HEK293 (cell line): ENCODE measurements at regions of chr16 and their contacts with region 1.

Region 1: GRCh38 chr16:4402439-4403132 is 13.8 kb downstream of the CORO7 start:
- H3K4me3 ChIP-seq: no peak overlapping the region
- H3K27ac ChIP-seq: no peak overlapping the region
- H3K4me1 ChIP-seq: no peaks in the 10 kb centered on the region
- CTCF ChIP-seq: peak; percentile 98

Region 2: GRCh38 chr16:4261557-4262172 is 140.9 kb before region 1 on chr16:
- CTCF ChIA-PET with region 1: interaction called, 14 read pairs
- POLR2A ChIA-PET with region 1: no interaction called
- H3K4me3 ChIP-seq: no peak overlapping the region
- H3K27ac ChIP-seq: no peak overlapping the region
- H3K4me1 ChIP-seq: no peaks in the 10 kb centered on the region
- CTCF ChIP-seq: peak; percentile 56

Region 3: DNA sequence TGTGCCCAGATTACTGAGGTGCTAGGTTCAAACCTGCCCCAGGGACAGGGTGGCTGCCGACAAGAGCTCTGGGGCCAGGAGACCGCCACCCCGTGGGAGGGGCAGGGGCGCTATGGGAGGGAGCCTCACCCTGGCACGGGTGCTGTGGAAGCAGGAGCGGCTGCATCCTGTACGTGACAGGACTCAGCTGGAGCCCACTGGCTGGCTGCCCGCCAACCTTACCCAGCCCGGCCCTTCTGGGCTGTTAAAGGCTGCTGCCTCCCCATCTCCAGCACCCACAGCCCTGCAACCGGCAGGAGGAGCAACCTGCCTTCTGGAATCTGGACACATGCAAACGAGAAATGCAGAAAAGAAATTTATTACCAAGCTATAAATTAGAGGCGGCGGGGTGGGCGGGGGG is 62.7 kb before region 1 on chr16:
- CTCF ChIA-PET with region 1: interaction called, 22 read pairs
- POLR2A ChIA-PET with region 1: no interaction called
- H3K4me3 ChIP-seq: no peak overlapping the region
- H3K27ac ChIP-seq: 0 out of 2 replicates have a peak overlapping the region, but pooled peaks have one; percentile 2
- H3K4me1 ChIP-seq: peaks cover 2% of the 10 kb centered on the region; the same call in 1 of the 2 replicates
- CTCF ChIP-seq: peak; percentile 35; the same call in 1 of the 2 replicates

Region 4: DNA sequence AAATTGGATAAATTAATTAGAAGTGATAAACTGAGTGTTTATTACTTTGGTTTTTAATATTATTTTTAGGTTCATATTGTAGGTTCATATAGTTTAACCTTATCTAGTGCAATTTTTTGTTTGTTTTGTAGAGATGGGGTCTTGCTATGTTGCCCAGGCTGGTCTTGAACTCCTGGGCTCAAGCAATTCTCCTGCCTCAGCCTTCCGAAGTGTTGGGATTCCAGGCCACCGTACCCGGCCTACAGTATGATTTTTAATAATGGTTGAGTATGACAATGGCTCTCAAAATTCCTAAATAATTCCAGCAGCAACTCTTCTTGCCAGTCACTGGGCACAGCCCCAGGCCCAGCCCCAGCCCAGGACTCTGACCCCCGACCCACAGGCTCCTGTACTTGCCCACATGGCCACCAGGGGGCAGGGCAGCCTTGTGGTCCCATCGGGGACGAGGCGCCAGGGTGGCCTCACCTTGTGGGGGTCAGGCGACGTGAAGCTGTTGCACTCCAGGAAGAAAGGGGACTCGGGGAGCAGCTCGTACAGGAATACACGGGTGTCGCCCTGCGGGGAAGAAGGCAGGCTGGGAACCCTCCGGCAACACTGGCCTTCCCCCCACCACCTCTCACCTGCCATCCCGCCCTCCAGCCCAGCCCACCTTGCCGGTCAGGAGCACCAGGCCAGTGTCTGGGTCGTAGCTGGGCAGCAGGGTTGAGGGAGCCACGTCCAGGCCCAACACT is 43.6 kb before region 1 on chr16:
- CTCF ChIA-PET with region 1: interaction called, 118 read pairs
- POLR2A ChIA-PET with region 1: interaction called, 7 read pairs
- H3K4me3 ChIP-seq: no peak overlapping the region
- H3K27ac ChIP-seq: no peak overlapping the region
- H3K4me1 ChIP-seq: no peaks in the 10 kb centered on the region
- CTCF ChIP-seq: peak; percentile 73

Region 5: DNA sequence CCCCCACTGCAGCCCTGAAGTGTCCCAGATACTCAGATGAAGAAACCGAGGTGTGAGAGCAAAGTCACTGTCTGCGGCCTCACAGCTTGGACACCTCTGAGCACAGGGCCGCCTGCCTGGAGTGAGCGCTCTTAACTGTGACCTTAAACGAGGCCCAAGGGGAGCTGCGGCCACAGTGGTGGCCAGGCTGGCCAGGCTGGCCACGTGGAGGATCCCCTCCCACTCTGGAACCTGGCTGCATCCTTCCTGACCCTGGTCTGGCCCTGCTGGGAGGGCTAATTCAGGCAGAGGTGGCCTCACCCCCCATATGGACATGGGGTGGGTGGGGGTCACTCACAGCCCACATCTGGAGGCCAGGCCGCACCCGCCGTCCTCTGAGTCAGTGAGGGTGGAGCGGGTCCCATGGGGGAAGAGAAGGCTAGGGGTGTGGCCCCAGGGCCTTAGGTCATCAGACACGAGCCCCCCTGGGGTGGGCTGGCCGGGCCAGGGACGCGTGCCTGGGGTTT is 24.4 kb before region 1 on chr16:
- CTCF ChIA-PET with region 1: interaction called, 32 read pairs
- POLR2A ChIA-PET with region 1: no interaction called
- H3K4me3 ChIP-seq: no peak overlapping the region
- H3K27ac ChIP-seq: no peak overlapping the region
- H3K4me1 ChIP-seq: peaks cover 10% of the 10 kb centered on the region
- CTCF ChIP-seq: 0 out of 2 replicates have a peak, but pooled peaks have one; percentile 2